Thyroid gland (tissue), 4 donors: ENCODE measurements at regions of chr11 and their contacts with region 1.

Region 1: DNA sequence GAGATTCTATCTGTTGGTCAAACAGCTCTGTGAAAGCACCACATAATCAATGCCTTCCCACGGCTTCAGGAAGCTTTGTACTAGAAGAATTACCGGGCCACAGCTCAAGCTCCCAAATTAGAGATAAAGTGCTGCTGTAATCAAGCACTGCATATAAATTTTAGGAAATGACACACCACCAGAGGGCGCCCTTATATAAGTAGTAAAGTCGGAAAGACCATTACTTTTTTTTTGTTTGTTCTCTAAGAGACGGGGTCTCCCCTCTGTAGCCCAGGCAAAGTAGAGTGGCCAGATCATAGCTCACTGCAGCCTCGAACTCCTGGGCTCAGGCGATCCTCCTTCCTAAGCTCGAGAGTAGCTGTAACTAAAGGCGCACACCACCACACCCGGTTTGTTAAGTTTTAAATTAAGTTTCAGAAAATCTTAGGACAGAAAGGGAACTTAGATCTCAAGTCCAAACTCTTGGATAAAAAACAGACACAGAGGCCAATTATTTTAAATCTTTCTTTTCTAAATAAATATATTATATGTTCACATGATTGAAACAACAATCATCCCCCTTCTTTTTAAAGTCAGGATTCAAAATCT is 32.6 kb downstream of the PRCP start:
- DNase-seq: peak; percentile 77 to 83
- H3K4me3 ChIP-seq: no peak overlapping the region
- H3K27ac ChIP-seq: no peak overlapping the region
- H3K4me1 ChIP-seq: peaks cover 15 to 19% of the 10 kb centered on the region in 2 donors
- H3K27me3 ChIP-seq: no peaks in the 10 kb centered on the region
- CTCF ChIP-seq: peak in 5 of 6 experiments; percentile 58 to 71 (median 63)
- POLR2A ChIP-seq: no peak

Region 2: GRCh38 chr11:82733444-82734119 is 134.0 kb before region 1 on chr11 and contains the start of gene FAM181B:
- intact Hi-C with region 1: loop called (anchors 5 kb)
- DNase-seq: peak; percentile 68 to 78
- H3K4me3 ChIP-seq: peak within 1 kb of the TSS; percentile 38 to 58 (median 54)
- H3K27ac ChIP-seq: peak within 1 kb of the TSS; percentile 47 to 61 (median 52)
- H3K4me1 ChIP-seq: no peaks in the 10 kb centered on the region
- H3K27me3 ChIP-seq: no peaks in the 10 kb centered on the region
- CTCF ChIP-seq: no peak
- POLR2A ChIP-seq: peak in 1 of 2 donors; percentile 79
- total RNA-seq, gene FAM181B: 0.94 to 5.1 (median 1.5) TPM